ENCODE measurements at regions of chr15 and their contacts with region 1.

Region 1: GRCh38 chr15:99282121-99282520 is 30.8 kb downstream of the LRRC28 start:
- DNase-seq: no peak
- ATAC-seq: no peak
- H3K4me3 ChIP-seq: no peak overlapping the region
- H3K27ac ChIP-seq: no peak overlapping the region
- H3K4me1 ChIP-seq: peaks cover 7% of the 10 kb centered on the region; the same call in 1 of the 2 replicates
- H3K27me3 ChIP-seq: no peaks in the 10 kb centered on the region
- CTCF ChIP-seq: no peak
- EP300 ChIP-seq: no peak
- POLR2A ChIP-seq: no peak
- RAD21 ChIP-seq: no peak

Region 2: GRCh38 chr15:99296386-99296785 is 14.3 kb after region 1 on chr15:
- CTCF ChIA-PET with region 1: no interaction called
- POLR2A ChIA-PET with region 1: no interaction called
- in situ Hi-C with region 1: no loop called
- intact Hi-C with region 1: no loop called
- DNase-seq: no peak
- ATAC-seq: no peak
- H3K4me3 ChIP-seq: no peak overlapping the region
- H3K27ac ChIP-seq: no peak overlapping the region
- H3K4me1 ChIP-seq: peaks cover 19% of the 10 kb centered on the region
- H3K27me3 ChIP-seq: no peaks in the 10 kb centered on the region; a peak in 1 of 5 replicates
- CTCF ChIP-seq: no peak
- EP300 ChIP-seq: no peak
- POLR2A ChIP-seq: no peak
- RAD21 ChIP-seq: no peak

Region 3: DNA sequence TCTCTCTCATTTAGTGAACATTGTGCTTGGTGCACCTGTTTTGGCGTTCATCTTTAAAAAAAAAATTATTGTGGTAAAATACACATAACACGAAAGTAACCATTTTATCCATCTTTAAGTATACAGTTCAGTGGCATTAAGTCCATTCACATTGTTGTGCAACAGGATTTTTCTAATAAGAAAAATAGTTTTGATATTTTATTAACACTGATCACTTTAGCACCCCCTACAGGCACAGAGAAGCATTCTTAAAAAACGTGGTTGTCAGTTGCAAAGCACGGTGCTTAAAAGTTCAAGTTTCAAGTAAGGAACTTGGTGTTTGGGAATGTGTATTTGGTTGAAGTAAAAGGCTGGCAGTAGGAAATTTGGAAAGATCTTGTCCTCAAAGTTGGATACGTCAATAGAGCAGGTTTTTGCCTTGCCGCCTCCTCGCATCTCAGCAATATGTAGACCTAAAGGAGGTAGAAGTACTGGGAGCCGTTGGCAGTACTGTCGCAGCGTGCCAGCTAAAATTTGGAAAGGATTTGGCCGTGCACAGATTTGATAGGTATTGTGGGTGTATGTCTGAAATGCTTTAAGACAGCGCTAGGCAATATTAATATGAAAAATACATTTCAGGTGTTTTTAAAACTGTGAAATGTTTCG is 79.5 kb after region 1 on chr15:
- CTCF ChIA-PET with region 1: no interaction called
- POLR2A ChIA-PET with region 1: no interaction called
- in situ Hi-C with region 1: no loop called
- intact Hi-C with region 1: loop called (anchors 5 kb)
- DNase-seq: no peak
- ATAC-seq: no peak
- H3K4me3 ChIP-seq: no peak overlapping the region
- H3K27ac ChIP-seq: no peak overlapping the region
- H3K4me1 ChIP-seq: no peaks in the 10 kb centered on the region
- H3K27me3 ChIP-seq: no peaks in the 10 kb centered on the region
- CTCF ChIP-seq: peak; percentile 34
- EP300 ChIP-seq: no peak
- POLR2A ChIP-seq: no peak
- RAD21 ChIP-seq: no peak

Region 4: DNA sequence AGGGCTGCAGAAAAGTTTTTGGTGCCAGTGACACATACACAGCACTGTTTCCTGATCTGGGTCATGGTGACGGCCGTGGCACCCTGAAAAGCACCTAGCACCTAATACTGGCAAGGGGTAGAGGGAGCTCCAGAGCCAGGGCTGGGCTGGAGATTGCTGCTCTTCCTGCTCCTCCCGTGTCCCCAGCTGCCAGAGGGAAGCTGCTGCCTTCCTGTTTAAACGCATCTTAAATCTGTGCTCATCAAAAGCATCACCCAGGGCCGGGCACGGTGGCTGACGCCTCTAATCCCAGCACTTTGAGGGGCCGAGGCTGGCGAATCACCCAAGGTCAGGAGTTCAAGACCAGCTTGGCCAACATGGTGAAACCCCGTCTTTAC is 127.0 kb after region 1 on chr15:
- CTCF ChIA-PET with region 1: no interaction called
- POLR2A ChIA-PET with region 1: no interaction called
- in situ Hi-C with region 1: no loop called
- intact Hi-C with region 1: loop called (anchors 5 kb)
- DNase-seq: peak; percentile 66
- ATAC-seq: peak; percentile 94
- H3K4me3 ChIP-seq: peak overlapping the region in 1 of 3 experiments; percentile 40; a peak in 1 of 6 replicates
- H3K27ac ChIP-seq: no peak overlapping the region
- H3K4me1 ChIP-seq: peaks cover 40% of the 10 kb centered on the region
- H3K27me3 ChIP-seq: no peaks in the 10 kb centered on the region; a peak in 1 of 5 replicates
- CTCF ChIP-seq: peak; percentile 91
- EP300 ChIP-seq: no peak
- POLR2A ChIP-seq: no peak
- RAD21 ChIP-seq: peak; percentile 85

Region 5: GRCh38 chr15:99704444-99704838 is 422.3 kb after region 1 on chr15:
- CTCF ChIA-PET with region 1: interaction called, 26 read pairs
- POLR2A ChIA-PET with region 1: interaction called, 3 read pairs
- in situ Hi-C with region 1: no loop called
- intact Hi-C with region 1: loop called (anchors 2 kb)
- DNase-seq: peak; percentile 81
- ATAC-seq: peak; percentile 89
- H3K4me3 ChIP-seq: no peak overlapping the region
- H3K27ac ChIP-seq: no peak overlapping the region
- H3K4me1 ChIP-seq: peaks cover 15% of the 10 kb centered on the region
- H3K27me3 ChIP-seq: no peaks in the 10 kb centered on the region
- CTCF ChIP-seq: peak; percentile 86
- EP300 ChIP-seq: no peak
- POLR2A ChIP-seq: no peak
- RAD21 ChIP-seq: peak; percentile 64; the same call in 1 of the 2 replicates